A673 (cell line): ENCODE measurements at regions of chr5 and their contacts with region 1.

Region 1: GRCh38 chr5:122091936-122092600 is 14.0 kb upstream of the LOX start:
- DNase-seq: peak; percentile 69
- H3K4me3 ChIP-seq: no peak overlapping the region
- H3K27ac ChIP-seq: no peak overlapping the region
- H3K4me1 ChIP-seq: peaks cover 10% of the 10 kb centered on the region
- H3K27me3 ChIP-seq: no peaks in the 10 kb centered on the region
- CTCF ChIP-seq: peak; percentile 69

Region 2: GRCh38 chr5:122156724-122157325 is 64.8 kb after region 1 on chr5:
- CTCF ChIA-PET with region 1: interaction called, 6 read pairs
- POLR2A ChIA-PET with region 1: no interaction called
- intact Hi-C with region 1: loop called (anchors 1 kb)
- DNase-seq: peak; percentile 52
- H3K4me3 ChIP-seq: no peak overlapping the region
- H3K27ac ChIP-seq: no peak overlapping the region
- H3K4me1 ChIP-seq: no peaks in the 10 kb centered on the region
- H3K27me3 ChIP-seq: no peaks in the 10 kb centered on the region
- CTCF ChIP-seq: peak; percentile 52

Region 3: GRCh38 chr5:122163121-122164069 is 71.3 kb after region 1 on chr5:
- CTCF ChIA-PET with region 1: no interaction called
- POLR2A ChIA-PET with region 1: no interaction called
- intact Hi-C with region 1: loop called (anchors 1 kb)
- DNase-seq: peak; percentile 87
- H3K4me3 ChIP-seq: no peak overlapping the region
- H3K27ac ChIP-seq: peak overlapping the region; percentile 42
- H3K4me1 ChIP-seq: peaks cover 15% of the 10 kb centered on the region
- H3K27me3 ChIP-seq: no peaks in the 10 kb centered on the region
- CTCF ChIP-seq: no peak